ENCODE measurements at regions of chr5 and their contacts with region 1.

Region 1: DNA sequence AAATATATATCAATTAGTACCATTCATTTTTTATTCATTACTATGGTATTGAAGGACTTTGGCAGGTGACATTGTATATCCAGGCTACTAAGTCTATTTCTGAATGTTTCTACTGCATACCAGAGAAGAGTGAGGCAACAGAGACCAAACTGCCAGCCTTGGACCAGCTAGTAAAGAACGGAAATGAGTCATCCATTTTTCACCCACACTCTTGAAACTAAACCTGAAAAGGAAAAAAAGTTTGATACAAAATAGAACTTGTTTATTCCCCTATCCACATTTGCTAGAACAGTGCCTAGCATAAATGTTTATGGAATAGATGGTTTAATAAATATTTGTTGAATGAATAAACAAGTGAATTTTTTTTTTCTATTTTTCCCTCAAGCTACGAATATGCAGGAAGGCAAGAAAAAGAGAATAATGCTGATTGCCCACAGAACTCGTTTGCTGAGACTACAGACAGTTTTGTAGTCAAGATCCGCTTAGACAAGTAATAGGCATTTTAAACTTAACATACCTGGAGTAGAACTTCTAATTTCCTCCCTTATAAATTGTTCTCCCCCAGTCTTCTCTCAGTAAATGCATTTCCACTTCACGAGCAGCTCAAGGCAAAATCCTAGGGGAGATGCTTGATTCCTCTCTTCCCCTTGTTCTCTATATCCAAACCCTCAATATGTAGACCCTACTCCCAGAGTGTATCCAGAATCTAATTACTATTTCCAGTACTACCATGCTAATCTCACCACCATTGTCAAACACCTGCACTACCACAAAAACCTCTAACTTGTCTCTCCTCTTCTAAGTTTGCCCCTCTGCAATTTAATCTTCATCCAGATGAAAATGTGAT is 146.2 kb upstream of the RASA1 start:
- DNase-seq: peak; percentile 10 to 78
- H3K4me3 ChIP-seq: peak overlapping the region in 1 of 2 donors; percentile 11
- H3K27ac ChIP-seq: peak overlapping the region; percentile 80 to 89
- H3K4me1 ChIP-seq: peaks cover 0 to 16% of the 10 kb centered on the region in 2 donors
- H3K27me3 ChIP-seq: no peaks in the 10 kb centered on the region
- CTCF ChIP-seq: no peak

Region 2: DNA sequence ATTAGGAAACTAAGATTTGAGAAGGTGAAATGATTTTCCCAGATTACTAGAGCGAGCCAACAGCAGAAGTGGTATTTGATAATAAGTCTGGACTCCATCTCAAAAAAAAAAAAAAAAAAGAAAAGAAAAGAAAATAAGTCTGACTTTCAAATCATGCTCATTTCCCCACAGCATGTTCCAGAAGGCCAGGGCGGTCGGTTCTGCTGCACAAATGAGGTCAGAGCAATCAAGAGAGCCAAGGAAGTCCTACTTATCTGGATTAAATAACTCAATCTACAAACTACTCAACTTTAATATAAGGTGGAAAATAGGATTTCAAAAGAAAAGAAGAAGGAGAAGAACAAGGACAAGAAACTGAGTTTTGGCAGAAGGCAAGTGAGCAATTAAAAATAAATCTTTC is 15.8 kb after region 1 on chr5:
- intact Hi-C with region 1: loop called (anchors 2 kb)
- DNase-seq: peak; percentile 29 to 83
- H3K4me3 ChIP-seq: no peak overlapping the region
- H3K27ac ChIP-seq: peak overlapping the region; percentile 83 to 84
- H3K4me1 ChIP-seq: peaks cover 11 to 35% of the 10 kb centered on the region in 2 donors
- H3K27me3 ChIP-seq: no peaks in the 10 kb centered on the region
- CTCF ChIP-seq: no peak